Heart left ventricle (tissue), 16 donors: ENCODE measurements at regions of chr5 and their contacts with region 1.

Region 1: DNA sequence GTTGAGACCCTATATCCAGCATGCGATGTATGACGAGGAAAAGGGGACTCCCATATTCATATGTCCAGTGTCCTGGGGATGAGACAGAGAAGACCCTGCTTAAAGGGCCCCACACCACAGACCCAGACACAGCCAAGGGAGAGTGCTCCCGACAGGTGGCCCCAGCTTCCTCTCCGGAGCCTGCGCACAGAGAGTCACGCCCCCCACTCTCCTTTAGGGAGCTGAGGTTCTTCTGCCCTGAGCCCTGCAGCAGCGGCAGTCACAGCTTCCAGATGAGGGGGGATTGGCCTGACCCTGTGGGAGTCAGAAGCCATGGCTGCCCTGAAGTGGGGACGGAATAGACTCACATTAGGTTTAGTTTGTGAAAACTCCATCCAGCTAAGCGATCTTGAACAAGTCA is 17.1 kb downstream of the BTNL3 start:
- DNase-seq: no peak
- ATAC-seq: no peak
- H3K4me3 ChIP-seq: no peak overlapping the region
- H3K27ac ChIP-seq: no peak overlapping the region
- H3K4me1 ChIP-seq: no peaks in the 10 kb centered on the region
- H3K27me3 ChIP-seq: peaks cover 0 to 5% (median 0%) of the 10 kb centered on the region in 9 donors
- CTCF ChIP-seq: no peak
- POLR2A ChIP-seq: no peak

Region 2: GRCh38 chr5:180328296-180329137 is 677.3 kb before region 1 on chr5:
- intact Hi-C with region 1: no loop called
- DNase-seq: peak; percentile 67 to 90 (median 77)
- ATAC-seq: peak in 3 of 4 donors; percentile 19 to 53 (median 46)
- H3K4me3 ChIP-seq: no peak overlapping the region
- H3K27ac ChIP-seq: no peak overlapping the region
- H3K4me1 ChIP-seq: peaks cover 0 to 8% (median 0%) of the 10 kb centered on the region in 12 donors
- H3K27me3 ChIP-seq: peaks cover 0 to 8% (median 0%) of the 10 kb centered on the region in 9 donors
- CTCF ChIP-seq: peak; percentile 48 to 81 (median 71)
- POLR2A ChIP-seq: no peak

Region 3: GRCh38 chr5:180441563-180441962 is 564.2 kb before region 1 on chr5:
- intact Hi-C with region 1: no loop called
- DNase-seq: no peak
- ATAC-seq: no peak
- H3K4me3 ChIP-seq: no peak overlapping the region
- H3K27ac ChIP-seq: no peak overlapping the region
- H3K4me1 ChIP-seq: no peaks in the 10 kb centered on the region
- H3K27me3 ChIP-seq: peaks cover 0 to 15% (median 0%) of the 10 kb centered on the region in 9 donors
- CTCF ChIP-seq: no peak
- POLR2A ChIP-seq: no peak

Region 4: DNA sequence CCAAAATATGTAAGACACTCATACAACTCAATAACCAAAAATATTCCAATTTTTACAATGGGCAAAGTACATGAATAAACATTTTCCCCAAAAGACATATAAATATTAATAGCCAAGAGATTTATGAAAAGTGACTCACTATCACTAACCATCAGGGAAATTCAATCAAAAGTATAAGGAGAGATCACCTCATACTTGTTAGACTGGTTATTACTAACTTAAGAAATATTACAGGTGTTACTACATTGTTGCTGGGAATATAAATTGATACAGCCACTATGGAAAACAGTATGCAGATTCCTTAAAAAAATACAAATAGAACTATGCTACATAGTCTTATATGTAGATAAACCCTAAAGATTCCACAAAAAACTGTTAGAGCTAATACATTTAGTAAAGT is 85.1 kb before region 1 on chr5:
- intact Hi-C with region 1: no loop called
- DNase-seq: no peak
- ATAC-seq: no peak
- H3K4me3 ChIP-seq: no peak overlapping the region
- H3K27ac ChIP-seq: no peak overlapping the region
- H3K4me1 ChIP-seq: no peaks in the 10 kb centered on the region
- H3K27me3 ChIP-seq: no peaks in the 10 kb centered on the region
- CTCF ChIP-seq: no peak
- POLR2A ChIP-seq: no peak

Region 5: DNA sequence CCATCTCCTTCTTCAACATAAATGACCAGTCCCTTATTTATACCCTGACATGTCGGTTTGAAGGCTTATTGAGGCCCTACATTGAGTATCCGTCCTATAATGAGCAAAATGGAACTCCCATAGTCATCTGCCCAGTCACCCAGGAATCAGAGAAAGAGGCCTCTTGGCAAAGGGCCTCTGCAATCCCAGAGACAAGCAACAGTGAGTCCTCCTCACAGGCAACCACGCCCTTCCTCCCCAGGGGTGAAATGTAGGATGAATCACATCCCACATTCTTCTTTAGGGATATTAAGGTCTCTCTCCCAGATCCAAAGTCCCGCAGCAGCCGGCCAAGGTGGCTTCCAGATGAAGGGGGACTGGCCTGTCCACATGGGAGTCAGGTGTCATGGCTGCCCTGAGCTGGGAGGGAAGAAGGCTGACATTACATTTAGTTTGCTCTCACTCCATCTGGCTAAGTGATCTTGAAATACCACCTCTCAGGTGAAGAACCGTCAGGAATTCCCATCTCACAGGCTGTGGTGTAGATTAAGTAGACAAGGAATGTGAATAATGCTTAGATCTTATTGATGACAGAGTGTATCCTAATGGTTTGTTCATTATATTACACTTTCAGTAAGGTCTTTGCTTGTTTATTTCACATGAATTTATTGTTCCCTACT is 55.4 kb before region 1 on chr5:
- intact Hi-C with region 1: loop called in 2 of 10 experiments (anchors 5 kb)
- DNase-seq: no peak
- ATAC-seq: no peak
- H3K4me3 ChIP-seq: no peak overlapping the region
- H3K27ac ChIP-seq: no peak overlapping the region
- H3K4me1 ChIP-seq: no peaks in the 10 kb centered on the region
- H3K27me3 ChIP-seq: no peaks in the 10 kb centered on the region
- CTCF ChIP-seq: no peak
- POLR2A ChIP-seq: no peak